ENCODE measurements at regions of chr6 and their contacts with region 1.

Region 1: DNA sequence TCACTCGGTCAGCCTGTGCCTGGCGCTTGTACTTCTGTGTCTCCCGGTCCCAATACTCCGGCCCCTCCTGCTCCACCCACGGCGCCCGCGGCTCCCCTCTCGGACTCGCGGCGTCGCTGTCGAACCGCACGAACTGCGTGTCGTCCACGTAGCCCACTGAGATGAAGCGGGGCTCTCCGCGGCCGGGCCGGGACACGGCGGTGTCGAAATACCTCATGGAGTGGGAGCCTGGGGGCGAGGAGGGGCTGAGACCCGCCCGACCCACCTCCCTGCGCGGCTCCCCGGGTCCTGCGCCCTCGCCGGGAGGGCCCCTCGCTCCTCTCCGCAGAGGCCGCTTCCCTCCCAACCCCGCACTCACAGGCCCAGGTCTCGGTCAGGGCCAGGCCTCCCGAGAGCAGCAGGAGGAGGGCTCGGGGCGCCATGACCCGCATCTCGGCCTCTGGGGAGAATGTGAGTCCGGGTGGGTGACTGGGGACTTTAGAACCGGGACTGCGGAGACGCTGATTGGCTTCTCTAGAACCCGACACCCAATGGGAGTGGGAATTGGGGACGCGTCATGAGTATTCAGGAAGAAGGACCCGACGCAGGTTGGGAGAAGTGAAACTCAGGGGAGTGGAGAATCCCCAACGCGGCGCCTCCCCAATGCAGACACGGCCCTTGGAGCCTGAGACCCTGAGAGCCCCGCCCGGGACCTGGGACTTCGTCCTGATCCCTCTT is at the start of gene HLA-C:
- DNase-seq: peak; percentile 79 to 98 (median 92)
- ATAC-seq: peak; percentile 85
- H3K4me3 ChIP-seq: peak within 1 kb of the TSS; percentile 82 to 86
- H3K4me3 Mint-ChIP-seq: peak within 1 kb of the TSS; percentile 95
- H3K27ac ChIP-seq: peak within 1 kb of the TSS; percentile 93 to 98
- H3K27ac Mint-ChIP-seq: peak within 1 kb of the TSS; percentile 100
- H3K4me1 ChIP-seq: peaks cover 43% of the 10 kb centered on the region
- H3K4me1 Mint-ChIP-seq: peaks cover 56% of the 10 kb centered on the region
- H3K27me3 ChIP-seq: no peaks in the 10 kb centered on the region
- H3K27me3 Mint-ChIP-seq: no peaks in the 10 kb centered on the region
- CTCF ChIP-seq: no peak
- total RNA-seq, gene HLA-C: 2,677 to 2,722 TPM

Region 2: GRCh38 chr6:30047220-30047619 is 1224.6 kb before region 1 on chr6:
- CTCF ChIA-PET with region 1: no interaction called
- POLR2A ChIA-PET with region 1: no interaction called
- intact Hi-C with region 1: no loop called
- DNase-seq: peak in 1 of 9 experiments; percentile 31
- ATAC-seq: peak; percentile 77
- H3K4me3 ChIP-seq: no peak overlapping the region
- H3K4me3 Mint-ChIP-seq: no peak overlapping the region
- H3K27ac ChIP-seq: no peak overlapping the region
- H3K27ac Mint-ChIP-seq: peak overlapping the region; percentile 81
- H3K4me1 ChIP-seq: no peaks in the 10 kb centered on the region
- H3K4me1 Mint-ChIP-seq: peaks cover 22% of the 10 kb centered on the region
- H3K27me3 ChIP-seq: no peaks in the 10 kb centered on the region
- H3K27me3 Mint-ChIP-seq: no peaks in the 10 kb centered on the region
- CTCF ChIP-seq: no peak

Region 3: GRCh38 chr6:31139599-31139998 is 132.2 kb before region 1 on chr6:
- CTCF ChIA-PET with region 1: no interaction called
- POLR2A ChIA-PET with region 1: interaction called, 3 read pairs
- intact Hi-C with region 1: loop called in 1 of 2 experiments (anchors 5 kb)
- DNase-seq: no peak
- ATAC-seq: no peak
- H3K4me3 ChIP-seq: no peak overlapping the region
- H3K4me3 Mint-ChIP-seq: no peak overlapping the region
- H3K27ac ChIP-seq: no peak overlapping the region
- H3K27ac Mint-ChIP-seq: no peak overlapping the region
- H3K4me1 ChIP-seq: peaks cover 5% of the 10 kb centered on the region
- H3K4me1 Mint-ChIP-seq: peaks cover 4% of the 10 kb centered on the region
- H3K27me3 ChIP-seq: no peaks in the 10 kb centered on the region
- H3K27me3 Mint-ChIP-seq: no peaks in the 10 kb centered on the region
- CTCF ChIP-seq: no peak

Region 4: GRCh38 chr6:31203345-31203979 is 68.3 kb before region 1 on chr6:
- CTCF ChIA-PET with region 1: interaction called, 7 read pairs
- POLR2A ChIA-PET with region 1: interaction called, 26 read pairs
- intact Hi-C with region 1: loop called in 1 of 2 experiments (anchors 1 kb)
- DNase-seq: peak in 7 of 9 experiments; percentile 29 to 90 (median 63)
- ATAC-seq: peak; percentile 60
- H3K4me3 ChIP-seq: peak overlapping the region; percentile 65 to 95
- H3K4me3 Mint-ChIP-seq: peak overlapping the region; percentile 93
- H3K27ac ChIP-seq: peak overlapping the region; percentile 84 to 95
- H3K27ac Mint-ChIP-seq: peak overlapping the region; percentile 98
- H3K4me1 ChIP-seq: peaks cover 46% of the 10 kb centered on the region
- H3K4me1 Mint-ChIP-seq: peaks cover 60% of the 10 kb centered on the region
- H3K27me3 ChIP-seq: no peaks in the 10 kb centered on the region
- H3K27me3 Mint-ChIP-seq: no peaks in the 10 kb centered on the region
- CTCF ChIP-seq: no peak

Region 5: GRCh38 chr6:31332637-31333602 is 61.1 kb after region 1 on chr6:
- CTCF ChIA-PET with region 1: no interaction called
- POLR2A ChIA-PET with region 1: interaction called, 4 read pairs
- intact Hi-C with region 1: loop called in 1 of 2 experiments (anchors 2 kb)
- DNase-seq: peak in 5 of 9 experiments; percentile 25 to 82 (median 62)
- ATAC-seq: peak; percentile 82
- H3K4me3 ChIP-seq: no peak overlapping the region
- H3K4me3 Mint-ChIP-seq: no peak overlapping the region
- H3K27ac ChIP-seq: no peak overlapping the region
- H3K27ac Mint-ChIP-seq: peak overlapping the region; percentile 14
- H3K4me1 ChIP-seq: no peaks in the 10 kb centered on the region
- H3K4me1 Mint-ChIP-seq: peaks cover 13% of the 10 kb centered on the region
- H3K27me3 ChIP-seq: no peaks in the 10 kb centered on the region
- H3K27me3 Mint-ChIP-seq: no peaks in the 10 kb centered on the region
- CTCF ChIP-seq: no peak

Region 6: GRCh38 chr6:31356946-31357466 is 85.2 kb after region 1 on chr6 and contains the start of gene HLA-B:
- CTCF ChIA-PET with region 1: no interaction called
- POLR2A ChIA-PET with region 1: interaction called, 37 read pairs
- intact Hi-C with region 1: loop called (anchors 1 kb)
- DNase-seq: peak; percentile 65 to 98 (median 79)
- ATAC-seq: peak; percentile 80
- H3K4me3 ChIP-seq: peak within 1 kb of the TSS; percentile 55 to 92
- H3K4me3 Mint-ChIP-seq: peak within 1 kb of the TSS; percentile 100
- H3K27ac ChIP-seq: peak within 1 kb of the TSS; percentile 97 to 99
- H3K27ac Mint-ChIP-seq: peak within 1 kb of the TSS; percentile 100
- H3K4me1 ChIP-seq: peaks cover 48% of the 10 kb centered on the region
- H3K4me1 Mint-ChIP-seq: peaks cover 59% of the 10 kb centered on the region
- H3K27me3 ChIP-seq: no peaks in the 10 kb centered on the region
- H3K27me3 Mint-ChIP-seq: no peaks in the 10 kb centered on the region
- CTCF ChIP-seq: no peak
- total RNA-seq, gene HLA-B: 9,693 to 10,002 TPM

Measured in CD8-positive, alpha-beta T cell (primary cell).